Heart left ventricle (tissue), 16 donors: ENCODE measurements at regions of chr2 and their contacts with region 1.

Region 1: GRCh38 chr2:178761759-178762371 is 45.4 kb downstream of the TTN start:
- DNase-seq: no peak
- ATAC-seq: no peak
- H3K4me3 ChIP-seq: no peak overlapping the region
- H3K27ac ChIP-seq: no peak overlapping the region
- H3K4me1 ChIP-seq: peaks cover 0 to 18% (median 0%) of the 10 kb centered on the region in 12 donors
- H3K27me3 ChIP-seq: no peaks in the 10 kb centered on the region
- CTCF ChIP-seq: peak; percentile 17 to 67 (median 54)
- POLR2A ChIP-seq: no peak

Region 2: GRCh38 chr2:179440642-179441251 is 678.9 kb after region 1 on chr2:
- intact Hi-C with region 1: loop called in 1 of 10 experiments (anchors 10 kb)
- DNase-seq: no peak
- ATAC-seq: no peak
- H3K4me3 ChIP-seq: no peak overlapping the region
- H3K27ac ChIP-seq: no peak overlapping the region
- H3K4me1 ChIP-seq: peaks cover 0 to 11% (median 0%) of the 10 kb centered on the region in 12 donors
- H3K27me3 ChIP-seq: peaks cover 0 to 7% (median 0%) of the 10 kb centered on the region in 9 donors
- CTCF ChIP-seq: peak; percentile 39 to 77 (median 62)
- POLR2A ChIP-seq: no peak